Naive thymus-derived CD4-positive, alpha-beta T cell (primary cell): ENCODE measurements at regions of chrX and their contacts with region 1.

Region 1: GRCh38 chrX:53422086-53422860 is at the start of gene SMC1A:
- DNase-seq: peak; percentile 80 to 99 (median 98)
- ATAC-seq: peak; percentile 92
- H3K4me3 ChIP-seq: peak within 1 kb of the TSS; percentile 91
- H3K4me3 Mint-ChIP-seq: peak within 1 kb of the TSS; percentile 89 to 100 (median 96)
- H3K27ac ChIP-seq: peak within 1 kb of the TSS; percentile 91
- H3K27ac Mint-ChIP-seq: peak within 1 kb of the TSS; percentile 93 to 100 (median 99)
- H3K4me1 ChIP-seq: peaks cover 10 to 15% of the 10 kb centered on the region in 2 donors
- H3K4me1 Mint-ChIP-seq: peaks cover 12 to 46% (median 30%) of the 10 kb centered on the region in 7 donors
- H3K27me3 ChIP-seq: no peaks in the 10 kb centered on the region
- H3K27me3 Mint-ChIP-seq: no peaks in the 10 kb centered on the region
- total RNA-seq, gene SMC1A: 53.0 to 108 (median 67.7) TPM

Region 2: DNA sequence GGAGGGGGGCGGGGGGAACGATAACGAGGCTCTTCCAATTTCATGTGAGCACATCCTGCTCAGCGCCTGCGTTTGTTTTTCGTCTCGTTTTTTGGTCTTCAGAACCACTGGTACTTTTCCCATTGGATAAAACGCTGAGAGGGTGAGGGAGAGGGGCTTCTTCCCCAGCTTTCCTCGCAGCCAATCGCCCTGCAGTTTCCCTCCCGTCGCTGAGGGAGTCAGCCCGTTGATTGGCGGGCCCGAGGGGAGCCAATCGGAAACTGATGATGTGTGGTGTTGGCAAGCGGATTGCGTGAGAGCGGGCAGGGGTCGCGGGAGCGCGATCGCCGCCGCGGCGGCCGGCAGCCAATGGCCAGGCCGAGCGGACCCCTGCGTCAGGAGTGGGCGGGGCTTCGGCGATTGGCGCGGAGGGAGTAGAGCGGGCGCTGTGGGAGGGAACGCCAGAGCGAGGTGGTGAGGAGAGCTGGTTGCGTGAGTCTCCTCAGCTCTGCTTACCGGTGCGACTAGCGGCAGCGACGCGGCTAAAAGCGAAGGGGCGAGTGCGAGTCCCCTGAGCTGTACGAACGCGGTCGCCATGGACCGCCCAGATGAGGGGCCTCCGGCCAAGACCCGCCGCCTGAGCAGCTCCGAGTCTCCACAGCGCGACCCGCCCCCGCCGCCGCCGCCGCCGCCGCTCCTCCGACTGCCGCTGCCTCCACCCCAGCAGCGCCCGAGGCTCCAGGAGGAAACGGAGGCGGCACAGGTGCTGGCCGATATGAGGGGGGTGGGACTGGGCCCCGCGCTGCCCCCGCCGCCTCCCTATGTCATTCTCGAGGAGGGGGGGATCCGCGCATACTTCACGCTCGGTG is 340.1 kb before region 1 on chrX and contains the start of gene TSPYL2:
- CTCF ChIA-PET with region 1: no interaction called
- POLR2A ChIA-PET with region 1: interaction called, 3 read pairs
- intact Hi-C with region 1: loop called (anchors 1 to 2 kb)
- DNase-seq: peak; percentile 83 to 96 (median 93)
- ATAC-seq: peak; percentile 91
- H3K4me3 ChIP-seq: peak within 1 kb of the TSS; percentile 64
- H3K4me3 Mint-ChIP-seq: peak within 1 kb of the TSS; percentile 87 to 98 (median 92)
- H3K27ac ChIP-seq: peak within 1 kb of the TSS; percentile 85
- H3K27ac Mint-ChIP-seq: peak within 1 kb of the TSS; percentile 96 to 99 (median 97)
- H3K4me1 ChIP-seq: peaks cover 0 to 12% of the 10 kb centered on the region in 2 donors
- H3K4me1 Mint-ChIP-seq: peaks cover 25 to 47% (median 38%) of the 10 kb centered on the region in 7 donors
- H3K27me3 ChIP-seq: no peaks in the 10 kb centered on the region
- H3K27me3 Mint-ChIP-seq: peaks cover 0 to 3% (median 0%) of the 10 kb centered on the region in 5 donors
- total RNA-seq, gene TSPYL2: 23.4 to 239 (median 166) TPM

Region 3: GRCh38 chrX:53133400-53133799 is 288.9 kb before region 1 on chrX:
- CTCF ChIA-PET with region 1: no interaction called
- POLR2A ChIA-PET with region 1: no interaction called
- intact Hi-C with region 1: no loop called
- DNase-seq: no peak
- ATAC-seq: no peak
- H3K4me3 ChIP-seq: no peak overlapping the region
- H3K4me3 Mint-ChIP-seq: no peak overlapping the region
- H3K27ac ChIP-seq: no peak overlapping the region
- H3K27ac Mint-ChIP-seq: no peak overlapping the region
- H3K4me1 ChIP-seq: no peaks in the 10 kb centered on the region
- H3K4me1 Mint-ChIP-seq: no peaks in the 10 kb centered on the region
- H3K27me3 ChIP-seq: no peaks in the 10 kb centered on the region
- H3K27me3 Mint-ChIP-seq: no peaks in the 10 kb centered on the region

Region 4: GRCh38 chrX:53224860-53225797 is 197.1 kb before region 1 on chrX and contains the start of gene KDM5C:
- CTCF ChIA-PET with region 1: no interaction called
- POLR2A ChIA-PET with region 1: interaction called, 7 read pairs
- intact Hi-C with region 1: loop called (anchors 1 kb)
- DNase-seq: peak; percentile 65 to 97 (median 94)
- ATAC-seq: peak; percentile 88
- H3K4me3 ChIP-seq: peak within 1 kb of the TSS; percentile 94
- H3K4me3 Mint-ChIP-seq: peak within 1 kb of the TSS; percentile 93 to 100 (median 96)
- H3K27ac ChIP-seq: peak within 1 kb of the TSS; percentile 93
- H3K27ac Mint-ChIP-seq: peak within 1 kb of the TSS; percentile 96 to 100 (median 98)
- H3K4me1 ChIP-seq: peaks cover 25 to 27% of the 10 kb centered on the region in 2 donors
- H3K4me1 Mint-ChIP-seq: peaks cover 12 to 56% (median 40%) of the 10 kb centered on the region in 7 donors
- H3K27me3 ChIP-seq: no peaks in the 10 kb centered on the region
- H3K27me3 Mint-ChIP-seq: peaks cover 0 to 4% (median 0%) of the 10 kb centered on the region in 5 donors
- total RNA-seq, gene KDM5C: 104 to 216 (median 132) TPM

Region 5: DNA sequence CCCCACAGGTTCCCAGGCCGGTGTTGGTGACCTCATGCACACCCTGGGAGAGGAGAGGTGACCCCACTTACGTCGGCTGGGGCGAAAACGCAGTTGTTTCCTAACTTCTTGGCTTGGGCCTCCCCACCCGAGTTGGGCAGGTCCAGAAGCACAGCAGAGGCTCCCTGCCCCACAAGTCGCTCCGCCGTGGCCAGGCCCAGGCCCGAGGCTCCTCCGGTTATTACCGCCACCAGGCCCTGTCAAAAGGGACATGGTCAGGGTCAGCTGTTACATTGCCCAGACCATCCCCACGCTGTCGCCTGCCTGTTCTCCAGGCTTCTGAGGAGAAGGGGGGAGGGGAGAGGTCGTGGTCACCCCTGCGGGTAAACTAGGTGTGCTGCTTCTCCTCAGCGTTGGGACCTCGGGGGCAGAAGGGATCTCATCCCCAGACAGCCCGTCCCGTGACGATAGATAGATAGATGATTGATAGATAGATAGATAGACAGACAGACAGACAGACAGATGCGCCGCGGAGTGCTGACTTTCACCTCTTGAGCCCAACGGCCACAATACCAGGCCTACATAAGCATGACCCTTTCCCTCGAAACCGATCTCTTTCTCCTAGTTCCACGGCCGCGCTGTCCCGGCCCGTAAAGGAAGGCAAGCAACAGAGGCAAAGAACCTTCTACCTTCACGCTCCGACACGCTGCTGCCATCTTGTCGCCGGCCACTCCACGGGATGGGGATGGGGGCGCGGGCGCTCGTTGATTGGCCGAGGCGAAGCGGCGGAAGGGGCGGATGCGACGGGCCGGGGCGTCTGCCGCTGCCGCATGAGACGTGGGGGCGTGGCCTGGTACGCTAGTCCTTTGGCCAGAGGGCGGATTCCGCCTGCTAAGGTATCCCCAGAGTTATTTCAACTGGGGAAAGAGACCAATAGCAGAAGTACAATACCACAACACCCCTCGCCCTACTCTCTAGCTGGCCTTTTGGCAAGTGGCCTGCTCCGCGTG is 11.7 kb after region 1 on chrX and contains the start of gene HSD17B10:
- CTCF ChIA-PET with region 1: interaction called, 10 read pairs
- POLR2A ChIA-PET with region 1: interaction called, 20 read pairs
- intact Hi-C with region 1: loop called (anchors 1 kb)
- DNase-seq: peak; percentile 70 to 84 (median 81)
- ATAC-seq: peak; percentile 99
- H3K4me3 ChIP-seq: peak within 1 kb of the TSS; percentile 76
- H3K4me3 Mint-ChIP-seq: peak within 1 kb of the TSS; percentile 83 to 99 (median 94)
- H3K27ac ChIP-seq: peak within 1 kb of the TSS; percentile 82
- H3K27ac Mint-ChIP-seq: peak within 1 kb of the TSS; percentile 85 to 99 (median 94)
- H3K4me1 ChIP-seq: peaks cover 0 to 11% of the 10 kb centered on the region in 2 donors
- H3K4me1 Mint-ChIP-seq: peaks cover 8 to 32% (median 15%) of the 10 kb centered on the region in 7 donors
- H3K27me3 ChIP-seq: no peaks in the 10 kb centered on the region
- H3K27me3 Mint-ChIP-seq: no peaks in the 10 kb centered on the region
- total RNA-seq, gene HSD17B10: 23.9 to 116 (median 38.6) TPM

Region 6: GRCh38 chrX:54808605-54809483 is 1386.6 kb after region 1 on chrX:
- CTCF ChIA-PET with region 1: no interaction called
- POLR2A ChIA-PET with region 1: no interaction called
- intact Hi-C with region 1: loop called in 1 of 2 experiments (anchors 5 kb)
- DNase-seq: peak; percentile 63 to 90 (median 84)
- ATAC-seq: peak; percentile 84
- H3K4me3 ChIP-seq: peak overlapping the region; percentile 93
- H3K4me3 Mint-ChIP-seq: peak overlapping the region; percentile 90 to 99 (median 96)
- H3K27ac ChIP-seq: peak overlapping the region; percentile 89
- H3K27ac Mint-ChIP-seq: peak overlapping the region; percentile 93 to 98 (median 96)
- H3K4me1 ChIP-seq: no peaks in the 10 kb centered on the region
- H3K4me1 Mint-ChIP-seq: peaks cover 5 to 28% (median 19%) of the 10 kb centered on the region in 7 donors
- H3K27me3 ChIP-seq: no peaks in the 10 kb centered on the region
- H3K27me3 Mint-ChIP-seq: peaks cover 0 to 25% (median 0%) of the 10 kb centered on the region in 5 donors